ENCODE measurements at regions of chr10 and their contacts with region 1.

Region 1: GRCh38 chr10:121823993-121824463 is 103.8 kb downstream of the ATE1 start:
- DNase-seq: no peak
- H3K4me3 Mint-ChIP-seq: no peak overlapping the region
- H3K27ac Mint-ChIP-seq: no peak overlapping the region
- H3K4me1 Mint-ChIP-seq: no peaks in the 10 kb centered on the region
- H3K27me3 Mint-ChIP-seq: no peaks in the 10 kb centered on the region

Region 2: GRCh38 chr10:121608469-121609190 is 215.4 kb before region 1 on chr10:
- CTCF ChIA-PET with region 1: no interaction called
- DNase-seq: peak; percentile 46
- H3K4me3 Mint-ChIP-seq: no peak overlapping the region
- H3K27ac Mint-ChIP-seq: no peak overlapping the region
- H3K4me1 Mint-ChIP-seq: no peaks in the 10 kb centered on the region
- H3K27me3 Mint-ChIP-seq: peaks cover 26% of the 10 kb centered on the region

Region 3: GRCh38 chr10:121900443-121901174 is 76.6 kb after region 1 on chr10:
- CTCF ChIA-PET with region 1: interaction called, 17 read pairs
- DNase-seq: peak; percentile 23
- H3K4me3 Mint-ChIP-seq: no peak overlapping the region
- H3K27ac Mint-ChIP-seq: no peak overlapping the region
- H3K4me1 Mint-ChIP-seq: no peaks in the 10 kb centered on the region
- H3K27me3 Mint-ChIP-seq: no peaks in the 10 kb centered on the region